ENCODE measurements at regions of chr17 and their contacts with region 1.

Region 1: GRCh38 chr17:51322390-51323029 is 62.2 kb downstream of the UTP18 start:
- DNase-seq: peak; percentile 66
- ATAC-seq: peak; percentile 99
- H3K4me3 ChIP-seq: no peak overlapping the region
- H3K27ac ChIP-seq: no peak overlapping the region
- H3K4me1 ChIP-seq: no peaks in the 10 kb centered on the region
- H3K27me3 ChIP-seq: no peaks in the 10 kb centered on the region
- CTCF ChIP-seq: peak; percentile 91
- EP300 ChIP-seq: no peak
- POLR2A ChIP-seq: no peak
- RAD21 ChIP-seq: peak; percentile 64; the same call in 1 of the 2 replicates

Region 2: DNA sequence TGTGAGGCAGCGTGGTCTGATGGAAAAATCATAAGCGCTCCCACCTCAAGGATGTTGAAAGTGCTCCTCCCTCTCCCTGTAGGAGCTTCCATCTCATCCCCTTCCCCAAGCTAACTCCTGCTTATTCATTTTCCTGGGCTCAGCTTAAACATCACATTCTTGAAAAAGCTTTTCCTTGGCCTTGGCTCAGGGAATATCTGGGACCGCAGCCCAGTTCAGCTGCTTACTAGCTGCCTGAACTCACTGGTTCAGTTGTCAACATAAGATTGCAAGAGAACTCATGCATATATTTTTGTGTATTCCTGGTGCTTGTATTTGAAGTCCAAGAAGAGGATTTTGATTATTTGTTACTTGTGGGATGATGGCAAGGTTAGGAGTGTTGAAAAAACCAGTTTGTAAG is 29.4 kb after region 1 on chr17:
- CTCF ChIA-PET with region 1: no interaction called
- POLR2A ChIA-PET with region 1: no interaction called
- in situ Hi-C with region 1: no loop called
- intact Hi-C with region 1: no loop called
- DNase-seq: no peak
- ATAC-seq: no peak
- H3K4me3 ChIP-seq: no peak overlapping the region
- H3K27ac ChIP-seq: no peak overlapping the region
- H3K4me1 ChIP-seq: peaks cover 13% of the 10 kb centered on the region
- H3K27me3 ChIP-seq: peaks cover 0 to 32% of the 10 kb centered on the region in 2 experiments; a peak in 1 of 5 replicates
- CTCF ChIP-seq: no peak
- EP300 ChIP-seq: no peak
- POLR2A ChIP-seq: no peak
- RAD21 ChIP-seq: no peak

Region 3: GRCh38 chr17:51533821-51534220 is 211.3 kb after region 1 on chr17:
- CTCF ChIA-PET with region 1: interaction called, 3 read pairs
- POLR2A ChIA-PET with region 1: no interaction called
- in situ Hi-C with region 1: no loop called
- intact Hi-C with region 1: loop called (anchors 2 kb)
- DNase-seq: no peak
- ATAC-seq: no peak
- H3K4me3 ChIP-seq: no peak overlapping the region
- H3K27ac ChIP-seq: no peak overlapping the region
- H3K4me1 ChIP-seq: no peaks in the 10 kb centered on the region
- H3K27me3 ChIP-seq: no peaks in the 10 kb centered on the region
- CTCF ChIP-seq: no peak
- EP300 ChIP-seq: no peak
- POLR2A ChIP-seq: no peak
- RAD21 ChIP-seq: no peak

Measured in HepG2 (cell line).